MCF 10A (cell line): ENCODE measurements at regions of chr3 and their contacts with region 1.

Region 1: DNA sequence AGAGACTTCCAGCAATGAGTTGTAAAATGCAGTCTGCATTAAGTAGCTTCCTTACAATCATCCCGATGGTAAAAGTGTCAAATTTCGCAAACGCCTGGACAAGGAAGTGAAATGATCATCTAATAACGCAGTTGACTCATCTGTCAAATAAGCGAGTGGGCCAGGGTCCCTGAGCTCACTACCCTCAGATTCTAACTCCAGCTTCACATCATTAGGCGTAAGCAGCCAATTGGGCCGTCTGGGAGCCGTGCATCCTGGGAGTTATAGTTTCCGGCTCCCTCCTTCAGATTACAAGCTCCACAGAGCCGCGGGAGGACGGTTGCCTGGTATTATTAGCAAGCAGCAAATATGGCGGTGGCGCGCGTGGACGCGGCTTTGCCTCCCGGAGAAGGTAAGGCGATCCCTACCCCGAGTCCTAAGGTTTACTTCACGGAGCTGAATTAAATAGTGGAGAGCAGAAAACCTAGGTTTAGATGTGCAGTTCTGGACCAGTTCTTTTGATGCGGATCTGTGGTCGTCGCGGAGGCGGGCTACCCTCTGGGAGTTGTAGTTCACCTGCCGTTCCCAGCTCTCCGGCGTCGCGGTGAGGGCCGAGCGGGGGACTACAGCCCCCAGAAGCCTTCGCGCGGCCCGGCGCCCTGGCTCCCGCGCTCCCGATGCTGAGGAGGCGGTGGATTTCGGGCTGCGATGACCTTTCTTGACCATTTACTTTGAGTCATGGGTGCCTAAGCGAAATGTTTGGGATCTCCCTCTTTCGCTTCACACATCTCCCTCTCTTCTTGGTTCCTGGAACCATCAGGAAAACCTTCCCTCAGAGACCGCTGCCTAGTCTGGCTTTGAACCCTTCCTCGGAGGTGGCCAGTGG is at the start of gene CEP97:
- DNase-seq: peak; percentile 93
- H3K4me3 Mint-ChIP-seq: peak within 1 kb of the TSS; percentile 97
- H3K27ac Mint-ChIP-seq: peak within 1 kb of the TSS; percentile 84
- H3K4me1 Mint-ChIP-seq: peaks cover 30% of the 10 kb centered on the region
- H3K27me3 Mint-ChIP-seq: no peaks in the 10 kb centered on the region
- CTCF ChIP-seq: no peak
- total RNA-seq, gene CEP97: 11.5 and 14.2 TPM in 2 replicates

Region 2: GRCh38 chr3:100954990-100955389 is 769.6 kb before region 1 on chr3:
- CTCF ChIA-PET with region 1: no interaction called
- POLR2A ChIA-PET with region 1: no interaction called
- intact Hi-C with region 1: no loop called
- DNase-seq: peak; percentile 36
- H3K4me3 Mint-ChIP-seq: no peak overlapping the region
- H3K27ac Mint-ChIP-seq: peak overlapping the region; percentile 53
- H3K4me1 Mint-ChIP-seq: peaks cover 17% of the 10 kb centered on the region
- H3K27me3 Mint-ChIP-seq: no peaks in the 10 kb centered on the region
- CTCF ChIP-seq: no peak

Region 3: GRCh38 chr3:101676765-101677435 is 47.7 kb before region 1 on chr3 and contains the start of gene ZBTB11:
- CTCF ChIA-PET with region 1: interaction called, 3 read pairs
- POLR2A ChIA-PET with region 1: interaction called, 50 read pairs
- intact Hi-C with region 1: loop called (anchors 1 kb)
- DNase-seq: peak; percentile 100
- H3K4me3 Mint-ChIP-seq: peak within 1 kb of the TSS; percentile 82
- H3K27ac Mint-ChIP-seq: peak within 1 kb of the TSS; percentile 93
- H3K4me1 Mint-ChIP-seq: peaks cover 35% of the 10 kb centered on the region
- H3K27me3 Mint-ChIP-seq: no peaks in the 10 kb centered on the region
- CTCF ChIP-seq: peak; percentile 36
- total RNA-seq, gene ZBTB11: 28.9 and 30.0 TPM in 2 replicates

Region 4: DNA sequence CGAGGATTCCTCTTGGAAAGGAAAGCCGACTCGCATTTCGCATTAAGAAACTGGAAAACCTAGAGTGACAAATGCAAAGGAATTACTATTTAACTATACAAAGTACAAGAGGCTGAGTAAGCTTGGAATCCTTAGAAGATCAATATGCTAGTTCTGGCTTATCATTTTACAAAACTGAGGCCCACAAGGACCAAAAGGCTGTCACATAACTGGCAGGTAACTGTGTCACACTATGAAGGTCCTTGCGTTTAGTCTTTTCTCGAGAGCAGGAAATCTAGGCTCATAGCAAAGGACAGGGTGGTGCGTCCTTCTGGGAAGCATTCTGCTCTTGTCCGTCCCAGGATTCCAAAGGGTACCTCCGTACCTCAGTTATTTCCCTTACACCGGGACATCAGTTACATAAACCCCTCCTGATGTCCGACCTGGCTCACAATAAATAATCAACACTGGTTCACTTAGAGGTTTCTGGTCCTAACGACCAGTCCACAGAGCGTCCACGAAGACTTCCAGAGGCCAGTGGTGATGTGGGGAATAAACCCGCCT is 38.6 kb before region 1 on chr3:
- CTCF ChIA-PET with region 1: interaction called, 3 read pairs
- POLR2A ChIA-PET with region 1: interaction called, 47 read pairs
- intact Hi-C with region 1: no loop called
- DNase-seq: no peak
- H3K4me3 Mint-ChIP-seq: peak overlapping the region; percentile 96
- H3K27ac Mint-ChIP-seq: peak overlapping the region; percentile 98
- H3K4me1 Mint-ChIP-seq: peaks cover 20% of the 10 kb centered on the region
- H3K27me3 Mint-ChIP-seq: no peaks in the 10 kb centered on the region
- CTCF ChIP-seq: no peak

Region 5: GRCh38 chr3:101695779-101696372 is 28.7 kb before region 1 on chr3:
- CTCF ChIA-PET with region 1: interaction called, 3 read pairs
- POLR2A ChIA-PET with region 1: interaction called, 3 read pairs
- intact Hi-C with region 1: loop called (anchors 2 kb)
- DNase-seq: peak; percentile 75
- H3K4me3 Mint-ChIP-seq: no peak overlapping the region
- H3K27ac Mint-ChIP-seq: no peak overlapping the region
- H3K4me1 Mint-ChIP-seq: peaks cover 7% of the 10 kb centered on the region
- H3K27me3 Mint-ChIP-seq: no peaks in the 10 kb centered on the region
- CTCF ChIP-seq: peak; percentile 83

Region 6: DNA sequence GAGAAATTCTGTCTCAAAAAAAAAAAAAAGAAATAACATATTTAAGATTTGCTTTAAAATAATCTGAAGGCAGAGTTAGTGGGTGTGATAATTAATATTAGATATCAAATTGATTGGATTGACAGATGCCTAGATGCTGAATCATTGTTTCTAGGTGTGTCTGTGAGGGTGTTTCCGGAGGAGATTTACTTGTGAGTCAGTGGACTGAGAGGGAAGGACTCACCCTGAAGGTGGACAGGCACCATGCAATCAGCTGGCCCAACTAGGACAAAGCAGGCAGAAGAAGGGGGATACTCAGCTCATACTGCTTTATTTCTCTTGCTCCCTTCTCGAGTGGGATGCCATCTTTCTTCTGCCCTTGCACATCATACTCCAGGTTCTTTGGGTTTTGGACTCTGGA is 21.4 kb before region 1 on chr3:
- CTCF ChIA-PET with region 1: interaction called, 74 read pairs
- POLR2A ChIA-PET with region 1: interaction called, 12 read pairs
- intact Hi-C with region 1: no loop called
- DNase-seq: peak; percentile 75
- H3K4me3 Mint-ChIP-seq: no peak overlapping the region
- H3K27ac Mint-ChIP-seq: peak overlapping the region; percentile 59
- H3K4me1 Mint-ChIP-seq: peaks cover 20% of the 10 kb centered on the region
- H3K27me3 Mint-ChIP-seq: no peaks in the 10 kb centered on the region
- CTCF ChIP-seq: no peak

Region 7: GRCh38 chr3:101709126-101709525 is 15.4 kb before region 1 on chr3:
- CTCF ChIA-PET with region 1: interaction called, 74 read pairs
- POLR2A ChIA-PET with region 1: interaction called, 5 read pairs
- intact Hi-C with region 1: no loop called
- DNase-seq: no peak
- H3K4me3 Mint-ChIP-seq: no peak overlapping the region
- H3K27ac Mint-ChIP-seq: no peak overlapping the region
- H3K4me1 Mint-ChIP-seq: no peaks in the 10 kb centered on the region
- H3K27me3 Mint-ChIP-seq: no peaks in the 10 kb centered on the region
- CTCF ChIP-seq: no peak